Activated CD4-positive, alpha-beta T cell treated with anti-CD3 and anti-CD28 coated beads for 36 hours (primary cell): ENCODE measurements at regions of chr5 and their contacts with region 1.

Region 1: GRCh38 chr5:141923448-141924352 is at the start of gene DELE1:
- DNase-seq: peak; percentile 96
- ATAC-seq: peak; percentile 94
- H3K4me3 Mint-ChIP-seq: peak within 1 kb of the TSS; percentile 90
- H3K27ac Mint-ChIP-seq: peak within 1 kb of the TSS; percentile 96
- H3K4me1 Mint-ChIP-seq: peaks cover 16% of the 10 kb centered on the region
- H3K27me3 Mint-ChIP-seq: no peaks in the 10 kb centered on the region
- total RNA-seq, gene DELE1: 48.7 to 56.1 TPM

Region 2: GRCh38 chr5:141618804-141619554 is 304.7 kb before region 1 on chr5 and contains the start of gene DIAPH1:
- CTCF ChIA-PET with region 1: interaction called, 3 read pairs
- POLR2A ChIA-PET with region 1: no interaction called
- intact Hi-C with region 1: loop called in 1 of 2 experiments (anchors 5 kb)
- DNase-seq: peak; percentile 99
- ATAC-seq: peak; percentile 88
- H3K4me3 Mint-ChIP-seq: peak within 1 kb of the TSS; percentile 98
- H3K27ac Mint-ChIP-seq: peak within 1 kb of the TSS; percentile 98
- H3K4me1 Mint-ChIP-seq: peaks cover 64% of the 10 kb centered on the region
- H3K27me3 Mint-ChIP-seq: no peaks in the 10 kb centered on the region
- total RNA-seq, gene DIAPH1: 185 to 212 TPM

Region 3: DNA sequence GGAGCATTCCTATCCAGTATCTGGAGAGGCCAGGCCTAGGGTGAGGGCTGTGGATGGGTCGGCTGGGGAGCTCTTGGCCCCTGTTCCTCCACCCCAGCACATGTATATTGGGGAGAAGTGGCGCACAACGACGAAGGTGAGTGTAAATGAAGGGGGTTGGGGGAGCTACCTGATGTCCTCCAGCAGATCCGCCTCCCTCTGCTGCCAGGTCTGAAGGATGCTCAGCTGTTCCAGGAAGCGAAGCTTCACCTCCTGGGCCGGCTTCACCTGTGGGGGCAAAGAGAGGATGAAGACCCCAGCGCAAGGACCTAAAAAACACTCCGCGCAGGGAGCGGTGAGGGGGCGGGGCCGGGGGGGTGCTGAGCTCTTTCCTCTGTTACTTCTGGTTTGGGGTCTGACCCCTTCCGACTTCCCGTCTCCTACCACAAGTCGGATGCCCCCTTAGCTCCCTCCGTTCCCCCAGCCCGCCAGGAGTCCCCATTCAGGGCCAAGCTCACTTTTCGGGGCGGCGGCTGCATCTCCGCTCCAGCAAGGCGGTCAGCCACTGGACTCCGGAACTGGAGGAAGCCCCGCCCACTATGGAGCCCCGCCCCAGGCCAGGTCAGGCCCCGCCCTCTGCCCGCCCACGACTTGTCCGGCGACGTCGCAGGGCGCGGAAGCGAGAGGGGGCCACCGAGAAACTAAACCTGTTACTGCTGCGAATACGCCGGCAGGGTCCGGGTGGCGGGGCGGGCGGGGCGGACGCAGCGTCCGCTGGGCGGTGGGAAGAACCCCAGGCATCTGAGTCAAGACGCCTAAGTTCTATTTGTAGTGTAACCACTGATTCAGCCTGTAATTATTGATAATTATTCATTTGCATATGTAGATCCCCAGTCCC is 272.6 kb before region 1 on chr5 and contains the start of gene FCHSD1:
- CTCF ChIA-PET with region 1: no interaction called
- POLR2A ChIA-PET with region 1: no interaction called
- intact Hi-C with region 1: loop called in 1 of 2 experiments (anchors 1 kb)
- DNase-seq: peak; percentile 91
- ATAC-seq: peak; percentile 95
- H3K4me3 Mint-ChIP-seq: peak within 1 kb of the TSS; percentile 84
- H3K27ac Mint-ChIP-seq: peak within 1 kb of the TSS; percentile 94
- H3K4me1 Mint-ChIP-seq: peaks cover 20% of the 10 kb centered on the region
- H3K27me3 Mint-ChIP-seq: no peaks in the 10 kb centered on the region
- total RNA-seq, gene FCHSD1: 28.2 to 32.9 TPM

Region 4: GRCh38 chr5:141701360-141702119 is 222.2 kb before region 1 on chr5:
- CTCF ChIA-PET with region 1: interaction called, 3 read pairs
- POLR2A ChIA-PET with region 1: no interaction called
- intact Hi-C with region 1: loop called in 1 of 2 experiments (anchors 1 kb)
- DNase-seq: peak; percentile 47
- ATAC-seq: peak; percentile 46
- H3K4me3 Mint-ChIP-seq: peak overlapping the region; percentile 59
- H3K27ac Mint-ChIP-seq: no peak overlapping the region
- H3K4me1 Mint-ChIP-seq: peaks cover 20% of the 10 kb centered on the region
- H3K27me3 Mint-ChIP-seq: peaks cover 27% of the 10 kb centered on the region

Region 5: DNA sequence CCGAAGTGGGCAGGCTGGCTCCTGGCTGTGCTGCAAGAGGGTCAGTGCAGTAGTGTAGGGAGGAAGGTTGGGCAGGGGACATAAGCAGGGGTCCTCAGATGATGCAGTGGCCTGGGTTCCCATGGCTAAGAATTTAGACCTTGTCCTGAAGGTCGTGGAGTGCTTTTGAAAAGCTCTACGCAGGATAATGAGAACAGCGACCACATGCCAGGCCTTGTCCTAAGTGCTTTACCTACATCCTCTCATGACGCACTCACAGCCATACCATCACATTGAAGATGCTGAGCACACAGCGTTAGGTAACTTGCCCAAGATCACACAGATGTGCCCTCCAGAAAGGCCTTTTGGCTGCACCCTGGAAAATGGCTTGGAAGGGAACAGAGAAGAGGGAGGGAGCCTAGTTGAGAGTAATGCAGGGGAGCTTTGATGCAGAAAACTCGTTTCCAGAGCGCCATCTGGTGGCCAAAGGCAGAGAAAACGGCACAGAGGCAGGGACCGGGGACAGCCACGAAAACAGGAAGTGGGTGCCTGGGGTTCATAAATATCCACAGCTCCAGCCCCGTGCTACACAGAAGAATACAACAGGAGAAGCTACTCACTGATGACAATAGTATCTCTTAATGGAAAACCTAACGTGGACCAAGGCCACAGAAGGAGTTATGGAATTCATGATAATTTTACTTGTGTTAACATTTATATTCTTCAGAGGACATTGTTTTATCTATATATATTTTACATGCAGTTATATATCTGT is 36.9 kb after region 1 on chr5:
- CTCF ChIA-PET with region 1: interaction called, 21 read pairs
- POLR2A ChIA-PET with region 1: interaction called, 4 read pairs
- intact Hi-C with region 1: loop called in 1 of 2 experiments (anchors 1 kb)
- DNase-seq: peak; percentile 95
- ATAC-seq: peak; percentile 88
- H3K4me3 Mint-ChIP-seq: peak overlapping the region; percentile 10
- H3K27ac Mint-ChIP-seq: peak overlapping the region; percentile 82
- H3K4me1 Mint-ChIP-seq: peaks cover 38% of the 10 kb centered on the region
- H3K27me3 Mint-ChIP-seq: no peaks in the 10 kb centered on the region

Region 6: GRCh38 chr5:142108432-142109330 is 185.0 kb after region 1 on chr5 and contains the start of gene NDFIP1:
- CTCF ChIA-PET with region 1: no interaction called
- POLR2A ChIA-PET with region 1: no interaction called
- intact Hi-C with region 1: loop called in 1 of 2 experiments (anchors 5 kb)
- DNase-seq: peak; percentile 93
- ATAC-seq: peak; percentile 86
- H3K4me3 Mint-ChIP-seq: peak within 1 kb of the TSS; percentile 95
- H3K27ac Mint-ChIP-seq: peak within 1 kb of the TSS; percentile 99
- H3K4me1 Mint-ChIP-seq: peaks cover 67% of the 10 kb centered on the region
- H3K27me3 Mint-ChIP-seq: no peaks in the 10 kb centered on the region
- total RNA-seq, gene NDFIP1: 54.9 to 86.7 TPM